Right ventricle myocardium inferior (tissue), 1 donor: ENCODE measurements at regions of chr3 and their contacts with region 1.

Region 1: GRCh38 chr3:12556671-12557472 is at the start of gene MKRN2:
- DNase-seq: peak; percentile 95
- ATAC-seq: peak; percentile 97
- total RNA-seq, gene MKRN2: 31.0 TPM

Region 2: DNA sequence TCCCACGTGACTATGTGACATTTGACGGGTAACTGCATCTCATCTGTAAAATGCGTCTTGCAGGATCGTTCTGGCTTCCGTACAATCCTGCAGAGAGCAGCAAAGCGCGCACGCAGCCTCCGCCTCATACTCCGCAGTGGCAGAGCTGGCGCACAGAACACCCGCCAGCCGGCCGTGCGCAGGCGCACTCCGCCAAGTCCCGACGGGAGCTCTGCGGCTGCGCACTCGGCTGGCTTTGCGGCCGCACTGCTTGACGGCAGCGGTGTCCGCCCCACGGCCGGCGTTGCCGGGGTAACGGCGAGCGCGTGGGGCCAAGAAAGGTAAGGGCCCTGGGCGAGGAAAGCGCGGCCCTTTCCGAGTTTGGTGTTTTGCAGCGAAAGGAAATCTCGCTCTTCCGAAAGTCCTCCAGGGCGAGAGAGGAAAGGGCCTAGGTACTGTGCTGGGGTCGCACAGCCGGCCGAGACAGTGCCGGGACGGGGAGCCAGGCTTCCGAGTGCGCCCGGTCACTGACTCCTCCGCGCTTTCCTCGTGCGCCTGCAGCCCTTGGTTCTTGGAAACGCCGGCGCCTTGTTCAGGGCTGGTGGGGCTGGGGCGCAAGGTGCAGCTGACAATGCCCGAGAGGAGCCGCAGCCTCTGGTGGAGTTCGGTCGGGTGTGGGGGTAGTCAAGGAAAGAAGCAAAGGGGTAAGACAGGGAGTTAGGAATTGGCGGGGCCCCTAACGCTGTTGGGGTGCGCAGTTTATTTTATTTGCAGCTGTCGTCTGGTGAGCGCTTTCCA is 72.5 kb before region 1 on chr3 and contains the start of gene TSEN2:
- intact Hi-C with region 1: loop called (anchors 5 kb)
- DNase-seq: peak; percentile 98
- ATAC-seq: peak; percentile 96
- total RNA-seq, gene TSEN2: 24.1 TPM

Region 3: GRCh38 chr3:12522721-12523120 is 34.2 kb before region 1 on chr3:
- intact Hi-C with region 1: loop called (anchors 5 kb)
- DNase-seq: no peak
- ATAC-seq: peak; percentile 84

Region 4: GRCh38 chr3:12663936-12664908 is 107.3 kb after region 1 on chr3 and contains the start of gene RAF1:
- intact Hi-C with region 1: loop called (anchors 1 kb)
- DNase-seq: peak; percentile 99
- ATAC-seq: peak; percentile 97
- total RNA-seq, gene RAF1: 144 TPM

Region 5: DNA sequence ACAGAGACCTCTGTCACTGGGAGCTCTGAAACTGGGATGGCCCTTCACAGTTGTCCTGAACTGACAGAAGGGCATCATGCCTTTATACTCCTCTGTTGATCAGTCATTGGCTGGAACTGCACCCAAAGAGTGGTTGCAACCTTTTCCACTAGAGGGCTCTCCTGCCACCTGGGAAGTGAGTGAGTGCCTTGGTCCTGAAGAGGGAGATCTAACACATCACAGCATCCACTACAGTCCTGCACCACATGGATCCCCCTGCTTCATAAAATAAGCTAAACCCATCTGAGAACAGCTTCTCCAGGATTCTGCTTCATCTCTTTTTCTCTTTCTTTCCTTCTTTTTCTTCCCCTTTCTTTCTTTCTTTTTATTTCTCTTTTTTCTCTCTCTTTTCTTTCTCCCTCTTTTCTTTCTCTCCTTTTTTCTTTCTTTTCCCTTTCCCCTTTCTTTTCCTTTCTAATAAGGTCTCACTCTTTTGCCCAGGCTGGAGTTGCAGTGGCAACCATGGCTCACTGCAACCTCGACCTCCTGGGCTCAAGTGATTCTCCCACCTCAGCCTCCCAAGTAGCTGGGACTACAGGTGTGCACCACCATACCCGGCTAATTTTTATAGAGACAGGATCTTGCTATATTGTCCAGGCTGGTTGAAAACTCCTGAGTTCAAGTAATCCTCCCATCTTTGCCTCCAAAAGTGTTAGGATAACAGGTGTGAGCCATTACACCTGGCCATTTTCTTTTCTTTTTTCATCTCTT is 149.8 kb after region 1 on chr3:
- intact Hi-C with region 1: loop called (anchors 10 kb)
- DNase-seq: no peak
- ATAC-seq: peak; percentile 85

Region 6: GRCh38 chr3:12796171-12797123 is 239.6 kb after region 1 on chr3 and contains the start of gene CAND2:
- intact Hi-C with region 1: loop called (anchors 5 kb)
- DNase-seq: peak; percentile 87
- ATAC-seq: peak; percentile 90
- total RNA-seq, gene CAND2: 56.7 TPM